Activated naive CD4-positive, alpha-beta T cell treated with anti-CD3 and anti-CD28 coated beads for 36 hours (primary cell): ENCODE measurements at regions of chr1 and their contacts with region 1.

Region 1: GRCh38 chr1:175035865-175036264 is 12.6 kb upstream of the MRPS14 start:
- DNase-seq: no peak
- H3K4me3 Mint-ChIP-seq: no peak overlapping the region
- H3K27ac Mint-ChIP-seq: no peak overlapping the region
- H3K4me1 Mint-ChIP-seq: no peaks in the 10 kb centered on the region
- H3K27me3 Mint-ChIP-seq: no peaks in the 10 kb centered on the region

Region 2: DNA sequence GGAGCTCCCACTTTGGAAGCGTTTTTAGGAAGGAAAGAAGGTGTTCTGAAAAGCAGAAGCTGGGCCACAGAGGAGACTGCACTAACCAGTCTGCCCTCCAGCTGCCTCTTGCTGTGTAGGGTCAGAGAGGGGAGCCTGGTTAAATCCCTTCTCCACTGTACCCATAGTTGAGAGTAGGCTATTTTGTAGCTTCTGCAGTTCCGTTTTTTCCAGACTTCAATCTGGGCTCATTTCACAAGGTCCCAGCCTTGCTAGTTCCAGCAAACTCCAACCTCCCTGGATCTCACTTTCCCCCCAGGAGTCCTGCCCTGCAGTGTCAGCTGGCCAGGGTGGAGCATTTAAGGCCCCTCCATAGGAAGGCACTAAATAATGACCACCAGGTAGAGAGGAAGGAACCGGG is 42.8 kb after region 1 on chr1:
- CTCF ChIA-PET with region 1: no interaction called
- intact Hi-C with region 1: no loop called
- DNase-seq: no peak
- H3K4me3 Mint-ChIP-seq: no peak overlapping the region
- H3K27ac Mint-ChIP-seq: no peak overlapping the region
- H3K4me1 Mint-ChIP-seq: no peaks in the 10 kb centered on the region
- H3K27me3 Mint-ChIP-seq: no peaks in the 10 kb centered on the region

Region 3: DNA sequence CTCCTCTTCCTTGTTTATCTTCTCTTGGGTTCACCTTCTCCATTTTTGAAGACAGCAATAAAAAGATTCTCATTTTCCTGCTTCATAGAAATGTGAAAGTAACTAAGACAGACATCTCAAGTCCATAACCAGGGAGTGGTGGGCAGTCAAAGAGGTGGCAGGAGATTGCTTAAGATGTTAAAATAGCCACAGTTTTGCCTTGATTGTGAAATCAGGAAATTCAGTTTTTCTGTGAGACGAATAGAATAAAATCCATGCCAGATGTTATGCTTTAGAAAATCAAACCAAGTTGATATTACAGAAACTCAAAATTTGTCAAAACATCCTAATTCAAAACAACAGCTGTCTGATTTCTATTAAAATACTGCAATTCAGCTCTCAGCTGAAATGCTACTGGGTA is 89.0 kb after region 1 on chr1:
- CTCF ChIA-PET with region 1: interaction called, 35 read pairs
- intact Hi-C with region 1: no loop called
- DNase-seq: no peak
- H3K4me3 Mint-ChIP-seq: no peak overlapping the region
- H3K27ac Mint-ChIP-seq: no peak overlapping the region
- H3K4me1 Mint-ChIP-seq: no peaks in the 10 kb centered on the region
- H3K27me3 Mint-ChIP-seq: no peaks in the 10 kb centered on the region

Region 4: DNA sequence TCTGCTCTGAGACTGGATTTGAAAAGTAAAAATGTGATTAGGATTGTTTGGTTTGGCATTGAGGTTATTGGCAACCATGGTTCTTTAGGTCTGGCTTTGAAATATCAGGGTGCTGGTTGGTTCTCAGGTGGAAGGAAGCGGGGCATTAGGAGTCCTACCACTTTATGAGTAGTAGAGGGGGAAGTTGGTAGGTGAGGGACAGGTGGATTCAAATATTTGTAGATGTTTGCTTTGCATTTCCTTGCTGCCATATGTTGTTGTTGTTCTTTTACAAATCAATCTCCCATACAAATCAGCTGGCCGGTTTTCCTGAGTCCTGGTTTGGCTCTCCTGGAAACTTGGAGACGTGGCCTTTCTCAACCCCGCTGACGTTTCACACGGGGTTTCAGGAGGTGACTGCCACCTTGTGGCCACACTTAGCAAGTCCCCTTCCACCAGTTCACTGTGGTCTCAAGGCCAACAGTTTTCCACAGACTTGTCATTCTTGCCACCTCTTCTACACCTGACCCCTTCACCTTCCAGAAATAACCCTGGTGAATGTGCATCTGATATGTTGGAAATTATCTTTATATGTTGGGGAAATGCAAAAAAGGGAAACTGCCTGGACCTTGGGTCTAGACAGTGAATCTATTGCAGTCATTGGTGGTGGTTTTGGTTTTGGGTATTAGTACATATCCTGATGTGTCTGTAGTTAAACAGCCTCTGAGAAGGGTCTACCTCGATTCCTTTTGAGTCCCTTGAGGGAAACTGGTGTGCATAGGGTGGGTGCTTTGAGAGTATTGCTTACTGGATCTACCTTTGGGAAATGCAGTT is 283.8 kb after region 1 on chr1:
- CTCF ChIA-PET with region 1: no interaction called
- intact Hi-C with region 1: no loop called
- DNase-seq: peak; percentile 80
- H3K4me3 Mint-ChIP-seq: no peak overlapping the region
- H3K27ac Mint-ChIP-seq: no peak overlapping the region
- H3K4me1 Mint-ChIP-seq: peaks cover 12% of the 10 kb centered on the region
- H3K27me3 Mint-ChIP-seq: no peaks in the 10 kb centered on the region